B cell (primary cell): ENCODE measurements at regions of chr19 and their contacts with region 1.

Region 1: DNA sequence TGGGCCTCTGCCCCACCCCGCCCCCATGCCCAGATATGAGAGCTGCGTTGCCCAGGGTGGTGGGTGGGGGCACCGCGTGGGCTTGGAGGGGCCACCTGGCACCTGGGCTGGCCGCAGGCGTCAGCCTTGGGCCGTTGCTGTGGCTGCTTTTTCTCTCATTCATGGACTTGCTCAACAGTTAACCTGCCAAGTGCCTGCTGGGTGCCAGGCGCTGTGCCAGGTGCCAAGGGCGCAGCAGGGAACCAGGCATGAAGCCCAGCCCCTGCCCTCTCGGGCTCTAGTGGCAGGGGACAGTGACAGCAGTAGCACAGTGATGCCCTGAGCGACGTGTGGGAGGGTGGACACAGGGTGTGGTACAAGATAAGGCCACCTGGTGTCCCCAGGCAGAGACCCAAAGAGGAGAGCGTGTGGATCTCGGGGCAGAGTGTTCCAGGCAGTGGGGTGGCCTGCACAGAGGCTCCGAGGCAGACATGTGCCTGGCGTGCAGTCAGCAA is 28.1 kb downstream of the DHX34 start:
- DNase-seq: no peak
- ATAC-seq: no peak
- H3K4me3 ChIP-seq: no peak overlapping the region
- H3K4me3 Mint-ChIP-seq: no peak overlapping the region
- H3K27ac ChIP-seq: no peak overlapping the region
- H3K27ac Mint-ChIP-seq: no peak overlapping the region
- H3K4me1 ChIP-seq: peaks cover 9 to 14% of the 10 kb centered on the region in 2 donors
- H3K4me1 Mint-ChIP-seq: peaks cover 11% of the 10 kb centered on the region
- H3K27me3 ChIP-seq: no peaks in the 10 kb centered on the region
- H3K27me3 Mint-ChIP-seq: no peaks in the 10 kb centered on the region
- CTCF ChIP-seq: no peak

Region 2: DNA sequence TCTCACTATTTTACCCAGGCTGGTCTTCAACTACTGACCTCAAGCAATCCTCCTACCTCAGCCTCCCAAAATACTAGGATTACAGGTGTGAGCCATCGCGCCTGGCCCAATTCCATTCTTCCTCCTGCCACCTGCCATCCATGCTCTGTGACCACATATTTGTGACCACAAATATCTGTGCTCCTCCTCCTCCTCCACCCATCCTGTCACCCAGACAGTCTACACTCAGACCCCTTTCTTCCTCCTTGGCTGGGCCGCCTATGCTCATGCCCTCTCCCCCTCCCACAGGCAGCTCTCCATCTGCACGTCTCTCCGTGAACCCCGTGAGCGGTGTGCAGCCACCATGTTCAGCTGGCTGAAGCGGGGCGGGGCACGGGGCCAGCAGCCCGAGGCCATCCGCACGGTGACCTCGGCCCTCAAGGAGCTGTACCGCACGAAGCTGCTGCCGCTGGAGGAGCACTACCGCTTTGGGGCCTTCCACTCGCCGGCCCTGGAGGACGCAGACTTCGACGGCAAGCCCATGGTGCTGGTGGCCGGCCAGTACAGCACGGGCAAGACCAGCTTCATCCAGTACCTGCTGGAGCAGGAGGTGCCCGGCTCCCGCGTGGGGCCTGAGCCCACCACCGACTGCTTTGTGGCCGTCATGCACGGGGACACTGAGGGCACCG is 339.1 kb after region 1 on chr19:
- CTCF ChIA-PET with region 1: no interaction called
- POLR2A ChIA-PET with region 1: interaction called, 13 read pairs
- intact Hi-C with region 1: no loop called
- DNase-seq: no peak
- ATAC-seq: no peak
- H3K4me3 ChIP-seq: no peak overlapping the region
- H3K4me3 Mint-ChIP-seq: no peak overlapping the region
- H3K27ac ChIP-seq: no peak overlapping the region
- H3K27ac Mint-ChIP-seq: no peak overlapping the region
- H3K4me1 ChIP-seq: peaks cover 4 to 6% of the 10 kb centered on the region in 2 donors
- H3K4me1 Mint-ChIP-seq: no peaks in the 10 kb centered on the region
- H3K27me3 ChIP-seq: peaks cover 0 to 26% (median 8%) of the 10 kb centered on the region in 4 experiments
- H3K27me3 Mint-ChIP-seq: peaks cover 55% of the 10 kb centered on the region
- CTCF ChIP-seq: no peak